B cell (primary cell): ENCODE measurements at regions of chr15 and their contacts with region 1.

Region 1: GRCh38 chr15:69475769-69476358 is 23.2 kb downstream of the RPLP1 start:
- DNase-seq: peak; percentile 76
- ATAC-seq: peak; percentile 87
- H3K4me3 ChIP-seq: no peak overlapping the region
- H3K4me3 Mint-ChIP-seq: no peak overlapping the region
- H3K27ac ChIP-seq: no peak overlapping the region
- H3K27ac Mint-ChIP-seq: no peak overlapping the region
- H3K4me1 ChIP-seq: peaks cover 0 to 4% of the 10 kb centered on the region in 2 donors
- H3K4me1 Mint-ChIP-seq: peaks cover 2% of the 10 kb centered on the region
- H3K27me3 ChIP-seq: peaks cover 0 to 20% (median 8%) of the 10 kb centered on the region in 4 experiments
- H3K27me3 Mint-ChIP-seq: peaks cover 19% of the 10 kb centered on the region
- CTCF ChIP-seq: peak; percentile 97

Region 2: DNA sequence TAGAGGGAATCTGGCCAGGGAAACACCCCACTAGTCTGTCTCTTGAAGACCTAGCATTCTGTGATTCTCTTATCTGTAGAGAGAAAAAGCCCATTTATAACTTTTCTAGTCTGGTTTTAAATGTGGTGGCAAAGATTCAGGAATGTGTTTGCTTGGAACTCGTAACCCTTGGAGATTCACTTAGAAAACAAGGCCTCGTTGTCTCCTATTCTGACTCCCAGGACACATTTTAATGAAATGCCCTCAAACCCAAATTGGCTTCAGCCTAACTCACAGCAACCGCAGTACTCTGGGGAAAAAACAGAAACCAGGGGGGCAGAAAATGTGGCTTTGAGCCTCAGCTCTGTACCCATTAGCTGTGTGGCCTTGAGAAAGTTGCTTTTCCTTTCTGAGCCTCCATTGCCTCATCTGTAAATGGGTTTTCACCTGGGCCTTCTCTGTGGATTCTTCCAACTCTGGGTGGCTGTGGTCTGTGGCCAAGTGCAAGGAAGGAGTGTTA is 13.3 kb after region 1 on chr15:
- CTCF ChIA-PET with region 1: interaction called, 12 read pairs
- POLR2A ChIA-PET with region 1: interaction called, 5 read pairs
- intact Hi-C with region 1: no loop called
- DNase-seq: no peak
- ATAC-seq: no peak
- H3K4me3 ChIP-seq: no peak overlapping the region
- H3K4me3 Mint-ChIP-seq: no peak overlapping the region
- H3K27ac ChIP-seq: no peak overlapping the region
- H3K27ac Mint-ChIP-seq: no peak overlapping the region
- H3K4me1 ChIP-seq: no peaks in the 10 kb centered on the region
- H3K4me1 Mint-ChIP-seq: no peaks in the 10 kb centered on the region
- H3K27me3 ChIP-seq: peaks cover 0 to 3% (median 0%) of the 10 kb centered on the region in 4 experiments
- H3K27me3 Mint-ChIP-seq: peaks cover 34% of the 10 kb centered on the region
- CTCF ChIP-seq: no peak

Region 3: GRCh38 chr15:70504299-70504951 is 1028.6 kb after region 1 on chr15:
- CTCF ChIA-PET with region 1: interaction called, 10 read pairs
- POLR2A ChIA-PET with region 1: no interaction called
- intact Hi-C with region 1: no loop called
- DNase-seq: peak; percentile 62
- ATAC-seq: peak; percentile 73
- H3K4me3 ChIP-seq: peak overlapping the region in 3 of 5 experiments; percentile 15 to 32 (median 22)
- H3K4me3 Mint-ChIP-seq: peak overlapping the region; percentile 72
- H3K27ac ChIP-seq: peak overlapping the region; percentile 26 to 64
- H3K27ac Mint-ChIP-seq: peak overlapping the region; percentile 86
- H3K4me1 ChIP-seq: peaks cover 50 to 68% of the 10 kb centered on the region in 2 donors
- H3K4me1 Mint-ChIP-seq: peaks cover 58% of the 10 kb centered on the region
- H3K27me3 ChIP-seq: no peaks in the 10 kb centered on the region
- H3K27me3 Mint-ChIP-seq: no peaks in the 10 kb centered on the region
- CTCF ChIP-seq: no peak

Region 4: DNA sequence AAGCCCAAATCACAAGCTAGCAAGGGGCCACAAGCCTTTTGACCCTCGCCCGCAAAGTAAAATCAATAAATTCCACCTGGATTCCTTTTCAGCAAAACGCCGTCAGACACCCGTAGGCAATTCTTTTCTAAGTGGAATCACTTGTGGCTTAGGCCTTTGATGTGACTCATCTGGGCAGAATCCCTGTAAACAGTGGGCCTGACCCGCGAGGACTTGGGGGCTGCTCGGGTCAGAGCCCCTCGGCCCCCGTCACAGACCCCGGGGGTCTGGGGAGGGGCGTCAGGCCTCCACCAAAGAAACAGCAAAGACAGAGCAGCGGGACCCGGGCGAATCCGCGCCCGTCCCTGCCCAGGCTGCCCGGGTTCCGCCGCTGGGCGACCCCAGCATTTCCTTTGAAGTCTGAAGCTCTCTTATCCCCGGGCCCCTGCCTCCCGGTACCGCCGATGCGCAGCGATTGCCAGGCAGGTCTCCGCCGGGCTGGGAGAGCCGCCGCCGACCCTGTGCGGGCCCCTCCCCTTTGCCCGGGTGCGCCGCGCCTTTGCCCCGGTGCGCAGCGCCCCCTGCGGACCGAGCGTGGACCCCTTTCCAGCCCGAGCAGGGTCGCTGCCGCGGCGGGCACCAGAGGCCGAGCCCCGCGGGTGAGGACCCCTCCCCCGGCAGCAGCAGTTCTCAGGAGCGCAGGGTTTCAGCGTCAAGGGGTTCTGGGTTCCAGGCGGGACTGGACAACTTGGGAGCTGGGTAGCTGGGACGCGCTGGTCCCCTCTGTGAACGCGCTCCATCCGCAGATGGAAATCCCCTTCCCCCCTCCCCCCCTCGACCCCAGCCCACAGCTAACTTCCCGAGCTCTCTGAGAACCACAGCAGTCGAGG is 1109.2 kb after region 1 on chr15:
- CTCF ChIA-PET with region 1: no interaction called
- POLR2A ChIA-PET with region 1: no interaction called
- intact Hi-C with region 1: loop called (anchors 10 kb)
- DNase-seq: peak; percentile 25
- ATAC-seq: no peak
- H3K4me3 ChIP-seq: no peak overlapping the region
- H3K4me3 Mint-ChIP-seq: no peak overlapping the region
- H3K27ac ChIP-seq: no peak overlapping the region
- H3K27ac Mint-ChIP-seq: no peak overlapping the region
- H3K4me1 ChIP-seq: peaks cover 0 to 8% of the 10 kb centered on the region in 2 donors
- H3K4me1 Mint-ChIP-seq: peaks cover 8% of the 10 kb centered on the region
- H3K27me3 ChIP-seq: peaks cover 0 to 49% (median 14%) of the 10 kb centered on the region in 4 experiments
- H3K27me3 Mint-ChIP-seq: peaks cover 51% of the 10 kb centered on the region
- CTCF ChIP-seq: peak; percentile 35

Region 5: GRCh38 chr15:70810916-70811578 is 1335.2 kb after region 1 on chr15:
- CTCF ChIA-PET with region 1: interaction called, 58 read pairs
- POLR2A ChIA-PET with region 1: no interaction called
- intact Hi-C with region 1: no loop called
- DNase-seq: no peak
- ATAC-seq: no peak
- H3K4me3 ChIP-seq: no peak overlapping the region
- H3K4me3 Mint-ChIP-seq: no peak overlapping the region
- H3K27ac ChIP-seq: no peak overlapping the region
- H3K27ac Mint-ChIP-seq: no peak overlapping the region
- H3K4me1 ChIP-seq: peaks cover 0 to 7% of the 10 kb centered on the region in 2 donors
- H3K4me1 Mint-ChIP-seq: peaks cover 12% of the 10 kb centered on the region
- H3K27me3 ChIP-seq: peaks cover 0 to 4% (median 2%) of the 10 kb centered on the region in 4 experiments
- H3K27me3 Mint-ChIP-seq: peaks cover 8% of the 10 kb centered on the region
- CTCF ChIP-seq: no peak